PC-9 (cell line): ENCODE measurements at regions of chr7 and their contacts with region 1.

Region 1: DNA sequence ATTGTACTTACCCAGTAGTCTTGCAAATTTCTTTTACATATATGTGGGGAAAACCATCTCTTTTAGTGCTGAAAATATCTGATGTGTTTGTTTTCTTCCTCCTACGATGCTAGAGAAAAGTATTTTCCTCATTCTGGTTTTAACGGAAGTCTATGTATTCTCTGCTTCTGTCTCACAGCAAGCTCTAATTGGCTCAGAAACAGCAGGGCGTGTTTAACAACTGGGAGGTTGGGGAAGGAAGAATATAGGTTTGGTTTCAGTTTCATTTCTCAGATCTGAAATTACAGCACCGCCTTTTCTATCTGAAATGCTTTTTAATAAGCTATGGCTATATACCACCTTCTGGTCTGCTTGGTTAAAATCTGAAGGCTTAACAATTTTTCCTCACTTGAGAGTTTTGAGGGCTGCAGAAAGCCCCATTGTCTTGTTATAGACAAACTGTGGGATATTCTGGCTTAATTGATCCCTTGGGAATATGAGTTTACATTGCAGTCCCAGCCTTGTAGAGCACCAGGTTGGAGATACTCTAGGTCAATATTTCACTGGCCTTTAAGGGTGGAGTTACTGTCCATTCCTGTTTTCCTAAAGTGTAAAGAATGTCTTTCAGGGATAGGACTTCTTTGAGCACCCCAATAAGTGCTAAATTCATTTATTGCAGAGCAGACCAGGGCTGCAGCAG is at the start of gene SAMD9:
- DNase-seq: peak; percentile 44 to 79
- H3K4me3 ChIP-seq: peak within 1 kb of the TSS; percentile 48; the same call in 1 of the 2 replicates
- H3K27ac ChIP-seq: peak within 1 kb of the TSS; percentile 95
- H3K4me1 ChIP-seq: peaks cover 57% of the 10 kb centered on the region
- H3K27me3 ChIP-seq: no peaks in the 10 kb centered on the region
- CTCF ChIP-seq: no peak
- total RNA-seq, gene SAMD9: 7.0 and 12.1 TPM in 2 replicates

Region 2: DNA sequence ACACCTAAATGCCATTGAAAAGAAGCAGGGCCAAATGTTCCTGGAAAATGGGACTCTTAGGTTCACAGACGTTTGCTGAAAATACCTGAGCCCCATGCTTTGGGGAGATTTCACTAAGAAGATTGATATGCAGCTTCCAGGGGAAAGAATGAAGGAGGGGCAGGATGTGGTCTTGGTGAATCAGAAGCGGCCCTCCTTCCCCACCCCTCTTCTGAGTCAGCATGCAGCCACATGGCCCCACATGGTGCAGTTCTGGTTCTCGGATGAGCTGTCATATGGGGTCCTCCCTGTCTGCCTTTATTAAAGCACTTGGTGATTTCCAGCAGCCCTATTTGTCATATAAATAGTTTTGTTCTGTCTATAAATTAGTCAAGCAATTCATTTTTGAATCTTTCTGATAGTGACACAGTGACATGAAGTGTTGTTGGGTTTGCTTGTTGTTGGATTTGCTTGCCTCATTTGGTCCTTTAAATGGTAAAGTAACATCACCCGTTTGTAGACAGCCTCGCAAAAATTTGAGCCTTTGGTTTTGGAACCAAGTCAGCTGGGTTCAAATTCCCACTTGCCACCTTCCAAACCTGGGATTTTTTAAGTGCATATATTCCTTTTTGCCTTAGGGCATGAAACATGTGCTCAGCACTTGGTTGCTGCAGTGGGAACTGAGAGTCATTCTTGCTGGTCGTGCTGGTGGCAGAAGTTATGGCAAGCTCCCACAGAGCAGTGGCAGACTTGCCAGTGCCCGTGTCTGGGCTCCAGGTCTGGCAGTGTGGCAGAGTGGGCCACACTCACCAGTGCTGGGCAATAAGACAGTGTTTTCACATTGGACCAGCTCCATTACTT is 213.5 kb before region 1 on chr7:
- CTCF ChIA-PET with region 1: no interaction called
- POLR2A ChIA-PET with region 1: no interaction called
- intact Hi-C with region 1: loop called (anchors 5 kb)
- DNase-seq: peak; percentile 88 to 93
- H3K4me3 ChIP-seq: no peak overlapping the region
- H3K27ac ChIP-seq: peak overlapping the region; percentile 89
- H3K4me1 ChIP-seq: peaks cover 21% of the 10 kb centered on the region
- H3K27me3 ChIP-seq: no peaks in the 10 kb centered on the region
- CTCF ChIP-seq: no peak

Region 3: GRCh38 chr7:92916674-92917224 is 201.2 kb before region 1 on chr7:
- CTCF ChIA-PET with region 1: no interaction called
- POLR2A ChIA-PET with region 1: interaction called, 5 read pairs
- intact Hi-C with region 1: loop called (anchors 5 kb)
- DNase-seq: peak; percentile 86 to 95
- H3K4me3 ChIP-seq: no peak overlapping the region
- H3K27ac ChIP-seq: peak overlapping the region; percentile 83
- H3K4me1 ChIP-seq: peaks cover 18% of the 10 kb centered on the region
- H3K27me3 ChIP-seq: no peaks in the 10 kb centered on the region
- CTCF ChIP-seq: no peak

Region 4: GRCh38 chr7:93147363-93147762 is 29.4 kb after region 1 on chr7:
- CTCF ChIA-PET with region 1: no interaction called
- POLR2A ChIA-PET with region 1: interaction called, 9 read pairs
- intact Hi-C with region 1: loop called (anchors 2 kb)
- DNase-seq: peak; percentile 29 to 35
- H3K4me3 ChIP-seq: peak overlapping the region; percentile 43
- H3K27ac ChIP-seq: 0 out of 2 replicates have a peak overlapping the region, but pooled peaks have one; percentile 19
- H3K4me1 ChIP-seq: peaks cover 23% of the 10 kb centered on the region; the same call in 1 of the 2 replicates
- H3K27me3 ChIP-seq: no peaks in the 10 kb centered on the region
- CTCF ChIP-seq: no peak

Region 5: GRCh38 chr7:93160410-93160809 is 42.4 kb after region 1 on chr7:
- CTCF ChIA-PET with region 1: no interaction called
- POLR2A ChIA-PET with region 1: interaction called, 5 read pairs
- intact Hi-C with region 1: loop called (anchors 5 kb)
- DNase-seq: peak in 1 of 2 experiments; percentile 92
- H3K4me3 ChIP-seq: no peak overlapping the region
- H3K27ac ChIP-seq: peak overlapping the region; percentile 75
- H3K4me1 ChIP-seq: peaks cover 20% of the 10 kb centered on the region; the same call in 1 of the 2 replicates
- H3K27me3 ChIP-seq: no peaks in the 10 kb centered on the region
- CTCF ChIP-seq: no peak

Region 6: GRCh38 chr7:93178212-93178611 is 60.2 kb after region 1 on chr7:
- CTCF ChIA-PET with region 1: no interaction called
- POLR2A ChIA-PET with region 1: no interaction called
- intact Hi-C with region 1: no loop called
- DNase-seq: no peak
- H3K4me3 ChIP-seq: no peak overlapping the region
- H3K27ac ChIP-seq: no peak overlapping the region
- H3K4me1 ChIP-seq: no peaks in the 10 kb centered on the region
- H3K27me3 ChIP-seq: no peaks in the 10 kb centered on the region
- CTCF ChIP-seq: peak; percentile 52

Region 7: GRCh38 chr7:93231799-93232672 is 114.0 kb after region 1 on chr7 and contains the start of gene VPS50:
- CTCF ChIA-PET with region 1: interaction called, 5 read pairs
- POLR2A ChIA-PET with region 1: interaction called, 4 read pairs
- intact Hi-C with region 1: loop called (anchors 1 kb)
- DNase-seq: peak; percentile 95 to 96
- H3K4me3 ChIP-seq: peak within 1 kb of the TSS; percentile 70
- H3K27ac ChIP-seq: peak within 1 kb of the TSS; percentile 86
- H3K4me1 ChIP-seq: peaks cover 14% of the 10 kb centered on the region; the same call in 1 of the 2 replicates
- H3K27me3 ChIP-seq: no peaks in the 10 kb centered on the region
- CTCF ChIP-seq: peak; percentile 21; the same call in 1 of the 2 replicates
- total RNA-seq, gene VPS50: 20.3 and 32.2 TPM in 2 replicates

Region 8: DNA sequence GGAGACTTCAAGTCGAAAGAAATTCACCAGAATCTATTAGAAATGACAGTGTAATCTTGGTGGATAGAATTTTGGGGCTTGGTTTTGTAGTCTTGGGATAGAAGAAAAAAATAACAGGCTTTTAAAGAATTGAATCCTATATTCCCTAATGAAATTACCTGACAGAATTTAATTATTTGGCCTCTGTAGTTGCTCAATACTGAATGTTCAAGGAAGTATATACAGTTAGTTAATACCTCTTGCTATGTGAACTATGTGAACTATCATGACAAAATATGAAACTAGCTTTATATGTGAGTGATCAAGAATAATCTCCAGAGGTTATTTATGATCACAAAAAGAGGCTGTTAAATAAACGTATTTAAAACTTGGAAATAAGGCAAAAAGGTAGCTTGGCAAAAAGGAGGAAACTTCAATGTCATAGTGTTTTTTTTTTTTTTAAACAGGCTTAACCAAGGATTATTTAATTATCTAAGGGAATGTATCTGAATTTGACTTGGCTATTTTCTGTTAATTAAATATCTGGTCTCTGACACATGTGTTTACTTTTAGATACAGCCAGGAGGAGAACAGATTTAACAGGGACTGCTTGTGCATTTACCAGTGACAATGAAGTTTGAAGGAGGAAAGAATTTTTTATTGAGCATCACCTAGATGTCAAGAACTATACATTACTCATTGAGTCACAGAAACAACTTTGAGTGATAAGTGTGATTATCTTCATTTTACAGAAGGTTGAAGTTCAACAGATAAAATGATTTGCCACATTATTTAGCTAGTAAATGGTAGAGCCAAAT is 1380.1 kb after region 1 on chr7:
- CTCF ChIA-PET with region 1: no interaction called
- POLR2A ChIA-PET with region 1: no interaction called
- intact Hi-C with region 1: no loop called
- DNase-seq: no peak
- H3K4me3 ChIP-seq: no peak overlapping the region
- H3K27ac ChIP-seq: no peak overlapping the region
- H3K4me1 ChIP-seq: no peaks in the 10 kb centered on the region
- H3K27me3 ChIP-seq: no peaks in the 10 kb centered on the region
- CTCF ChIP-seq: no peak